Activated CD4-positive, alpha-beta T cell treated with anti-CD3 and anti-CD28 coated beads, Interleukin-2, amount 10 ng/mL, durations not matched to agents 7 days and 5 days (primary cell): ENCODE measurements at regions of chr2 and their contacts with region 1.

Region 1: GRCh38 chr2:207230261-207231105 is 64.7 kb upstream of the KLF7 start:
- DNase-seq: no peak
- H3K4me3 Mint-ChIP-seq: no peak overlapping the region
- H3K27ac Mint-ChIP-seq: no peak overlapping the region
- H3K4me1 Mint-ChIP-seq: peaks cover 29% of the 10 kb centered on the region
- H3K27me3 Mint-ChIP-seq: no peaks in the 10 kb centered on the region

Region 2: GRCh38 chr2:207164006-207164831 is 66.3 kb before region 1 on chr2:
- CTCF ChIA-PET with region 1: no interaction called
- POLR2A ChIA-PET with region 1: no interaction called
- DNase-seq: peak; percentile 21
- H3K4me3 Mint-ChIP-seq: peak overlapping the region; percentile 92
- H3K27ac Mint-ChIP-seq: peak overlapping the region; percentile 98
- H3K4me1 Mint-ChIP-seq: peaks cover 45% of the 10 kb centered on the region
- H3K27me3 Mint-ChIP-seq: no peaks in the 10 kb centered on the region

Region 3: DNA sequence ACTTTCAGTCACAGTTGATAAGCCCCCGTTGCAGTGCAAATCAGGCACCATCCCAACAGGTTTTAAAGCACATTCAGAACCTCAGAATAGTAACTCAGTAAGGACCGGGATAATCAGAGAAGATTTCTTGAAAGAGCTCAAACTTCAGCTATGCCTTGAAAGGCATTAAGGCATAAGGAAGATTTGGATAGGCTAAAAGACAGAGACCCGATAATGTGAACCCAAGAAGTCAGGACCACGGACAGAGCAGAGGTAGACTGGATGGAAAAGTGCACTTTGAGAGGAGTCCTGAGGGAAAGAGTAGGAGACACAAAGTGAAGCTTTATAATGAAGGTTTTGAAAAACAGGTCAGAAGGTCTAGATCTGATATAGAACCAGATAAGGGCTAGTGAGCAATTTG is 27.8 kb before region 1 on chr2:
- CTCF ChIA-PET with region 1: no interaction called
- POLR2A ChIA-PET with region 1: no interaction called
- DNase-seq: peak; percentile 22
- H3K4me3 Mint-ChIP-seq: no peak overlapping the region
- H3K27ac Mint-ChIP-seq: no peak overlapping the region
- H3K4me1 Mint-ChIP-seq: no peaks in the 10 kb centered on the region
- H3K27me3 Mint-ChIP-seq: no peaks in the 10 kb centered on the region

Region 4: DNA sequence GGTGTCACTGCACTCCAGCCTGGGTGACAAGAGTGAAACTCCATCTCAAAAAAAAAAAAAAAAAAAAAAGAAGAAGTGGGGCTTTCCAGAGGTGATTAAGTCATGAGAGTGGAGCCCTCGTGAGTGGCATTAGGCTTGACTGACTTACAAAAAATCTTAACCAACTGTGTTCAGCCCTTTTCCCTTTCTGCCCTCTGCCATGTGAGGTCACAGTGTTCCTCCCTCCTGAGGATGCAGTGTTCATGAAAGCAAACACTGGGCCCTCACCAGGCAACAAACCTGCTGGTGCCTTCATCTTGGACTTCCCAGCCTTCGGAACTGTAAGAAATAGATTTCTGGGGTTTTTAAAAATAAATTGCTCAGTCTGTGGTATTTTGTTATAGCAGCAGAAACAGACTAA is 431.7 kb after region 1 on chr2:
- CTCF ChIA-PET with region 1: no interaction called
- POLR2A ChIA-PET with region 1: interaction called, 10 read pairs
- DNase-seq: no peak
- H3K4me3 Mint-ChIP-seq: no peak overlapping the region
- H3K27ac Mint-ChIP-seq: no peak overlapping the region
- H3K4me1 Mint-ChIP-seq: no peaks in the 10 kb centered on the region
- H3K27me3 Mint-ChIP-seq: no peaks in the 10 kb centered on the region